ENCODE measurements at regions of chr3 and their contacts with region 1.

Region 1: DNA sequence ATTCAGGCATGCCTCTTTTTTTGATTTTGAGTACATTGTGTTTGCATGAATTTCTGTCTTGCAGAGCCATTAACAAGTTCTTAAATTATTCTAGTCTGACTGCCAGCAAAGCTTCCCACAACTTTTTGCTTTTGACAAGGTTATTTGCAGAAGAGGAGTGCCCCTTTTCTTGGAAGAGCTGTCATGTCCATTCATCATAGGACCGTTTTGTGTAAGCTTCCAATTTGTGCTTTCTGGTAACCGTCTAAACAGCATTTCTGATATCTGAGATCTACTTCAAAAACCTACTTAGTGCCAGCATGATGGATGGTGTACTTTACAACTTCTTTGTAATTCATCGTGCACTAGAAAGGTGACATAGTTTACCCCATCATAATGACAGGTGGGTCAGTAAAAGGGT is 379.7 kb downstream of the NAALADL2 start:
- DNase-seq: no peak
- ATAC-seq: no peak
- H3K4me3 ChIP-seq: no peak overlapping the region
- H3K27ac ChIP-seq: no peak overlapping the region
- H3K4me1 ChIP-seq: no peaks in the 10 kb centered on the region
- H3K27me3 ChIP-seq: no peaks in the 10 kb centered on the region
- CTCF ChIP-seq: no peak
- EP300 ChIP-seq: no peak
- POLR2A ChIP-seq: no peak
- RAD21 ChIP-seq: no peak

Region 2: GRCh38 chr3:175020101-175020500 is 218.7 kb before region 1 on chr3:
- CTCF ChIA-PET with region 1: no interaction called
- POLR2A ChIA-PET with region 1: interaction called, 10 read pairs
- RAD21 ChIA-PET with region 1: no interaction called
- SMC1A ChIA-PET with region 1: no interaction called
- in situ Hi-C with region 1: no loop called
- intact Hi-C with region 1: no loop called
- DNase-seq: no peak
- ATAC-seq: no peak
- H3K4me3 ChIP-seq: no peak overlapping the region
- H3K27ac ChIP-seq: no peak overlapping the region
- H3K4me1 ChIP-seq: no peaks in the 10 kb centered on the region
- H3K27me3 ChIP-seq: no peaks in the 10 kb centered on the region
- CTCF ChIP-seq: no peak
- EP300 ChIP-seq: no peak
- POLR2A ChIP-seq: no peak
- RAD21 ChIP-seq: no peak

Region 3: DNA sequence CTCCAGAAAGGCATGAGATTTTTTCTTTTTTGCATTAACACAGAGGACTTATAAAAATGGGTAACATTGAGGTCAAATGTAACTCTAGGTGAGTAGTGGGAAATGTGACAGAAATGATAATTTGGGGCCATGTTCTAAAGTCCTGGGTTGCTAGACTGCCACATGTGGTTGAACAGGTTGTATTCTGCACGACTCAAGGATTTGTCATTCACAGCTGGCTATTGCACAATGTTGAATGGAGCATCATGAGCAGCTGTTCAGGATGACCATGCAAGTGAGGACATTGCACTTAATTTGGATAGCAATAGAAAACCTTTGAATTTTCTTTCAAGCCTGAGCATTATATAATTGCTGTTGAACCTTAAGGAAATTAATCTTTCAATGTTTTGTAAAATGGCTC is 16.9 kb after region 1 on chr3:
- CTCF ChIA-PET with region 1: interaction called, 3 read pairs
- POLR2A ChIA-PET with region 1: no interaction called
- RAD21 ChIA-PET with region 1: interaction called, 8 read pairs
- SMC1A ChIA-PET with region 1: interaction called, 10 read pairs
- in situ Hi-C with region 1: no loop called
- intact Hi-C with region 1: no loop called
- DNase-seq: no peak
- ATAC-seq: peak; percentile 11
- H3K4me3 ChIP-seq: no peak overlapping the region
- H3K27ac ChIP-seq: no peak overlapping the region
- H3K4me1 ChIP-seq: no peaks in the 10 kb centered on the region
- H3K27me3 ChIP-seq: no peaks in the 10 kb centered on the region
- CTCF ChIP-seq: no peak
- EP300 ChIP-seq: no peak
- POLR2A ChIP-seq: no peak
- RAD21 ChIP-seq: no peak

Region 4: GRCh38 chr3:175554801-175555200 is 316.0 kb after region 1 on chr3:
- CTCF ChIA-PET with region 1: no interaction called
- POLR2A ChIA-PET with region 1: no interaction called
- RAD21 ChIA-PET with region 1: no interaction called
- SMC1A ChIA-PET with region 1: no interaction called
- in situ Hi-C with region 1: no loop called
- intact Hi-C with region 1: no loop called
- DNase-seq: no peak
- ATAC-seq: no peak
- H3K4me3 ChIP-seq: no peak overlapping the region
- H3K27ac ChIP-seq: no peak overlapping the region
- H3K4me1 ChIP-seq: no peaks in the 10 kb centered on the region
- H3K27me3 ChIP-seq: no peaks in the 10 kb centered on the region
- CTCF ChIP-seq: no peak
- EP300 ChIP-seq: no peak
- POLR2A ChIP-seq: no peak
- RAD21 ChIP-seq: no peak